CD14-positive monocyte (primary cell): ENCODE measurements at regions of chr1 and their contacts with region 1.

Region 1: GRCh38 chr1:29202584-29203340 is 21.1 kb upstream of the SRSF4 start:
- DNase-seq: peak; percentile 87 to 92 (median 92)
- H3K4me3 ChIP-seq: peak overlapping the region in 1 of 3 experiments; percentile 34
- H3K4me3 Mint-ChIP-seq: peak overlapping the region in 1 of 2 donors; percentile 51
- H3K27ac ChIP-seq: peak overlapping the region; percentile 57 to 76
- H3K27ac Mint-ChIP-seq: peak overlapping the region; percentile 78 to 95 (median 85)
- H3K4me1 ChIP-seq: peaks cover 19 to 22% of the 10 kb centered on the region in 2 donors
- H3K4me1 Mint-ChIP-seq: peaks cover 20% of the 10 kb centered on the region
- H3K27me3 ChIP-seq: no peaks in the 10 kb centered on the region
- H3K27me3 Mint-ChIP-seq: no peaks in the 10 kb centered on the region
- CTCF ChIP-seq: peak; percentile 88

Region 2: DNA sequence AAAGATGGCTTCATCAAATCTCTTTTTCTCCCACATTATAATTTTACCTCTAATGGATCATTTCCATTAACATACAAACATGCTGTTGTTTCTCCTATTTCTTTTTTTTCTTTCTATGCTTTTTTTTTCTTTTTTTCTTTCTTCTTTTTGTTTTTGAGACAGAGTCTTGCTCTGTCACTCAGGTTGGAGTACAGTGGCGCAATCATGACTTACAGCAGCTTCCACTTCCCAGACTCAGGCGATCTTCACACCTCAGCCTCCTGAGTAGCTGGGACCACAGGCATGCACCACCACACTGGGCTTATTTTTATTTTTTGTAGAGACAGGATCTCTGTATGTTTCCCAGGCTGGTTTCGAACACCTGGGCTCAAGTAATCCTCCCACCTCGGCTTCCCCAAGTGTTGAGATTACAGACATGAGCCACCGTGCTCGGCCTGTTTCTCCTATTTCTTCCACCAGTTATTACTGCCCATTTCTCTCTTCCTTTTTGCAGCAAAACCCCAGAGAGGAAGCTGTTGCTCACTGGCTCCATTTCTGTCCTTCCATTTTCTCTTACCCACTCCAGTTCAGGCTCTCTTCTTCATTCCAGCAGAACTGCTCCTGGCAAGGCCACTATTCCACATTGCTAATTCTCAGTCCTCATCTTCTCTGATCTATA is 422.9 kb before region 1 on chr1:
- intact Hi-C with region 1: loop called in 1 of 2 experiments (anchors 10 kb)
- DNase-seq: peak; percentile 20 to 37 (median 35)
- H3K4me3 ChIP-seq: peak overlapping the region in 1 of 3 experiments; percentile 40
- H3K4me3 Mint-ChIP-seq: peak overlapping the region; percentile 7 to 67
- H3K27ac ChIP-seq: peak overlapping the region; percentile 56 to 80
- H3K27ac Mint-ChIP-seq: peak overlapping the region; percentile 54 to 91 (median 78)
- H3K4me1 ChIP-seq: peaks cover 25 to 29% of the 10 kb centered on the region in 2 donors
- H3K4me1 Mint-ChIP-seq: peaks cover 39% of the 10 kb centered on the region
- H3K27me3 ChIP-seq: no peaks in the 10 kb centered on the region
- H3K27me3 Mint-ChIP-seq: peaks cover 0 to 2% (median 0%) of the 10 kb centered on the region in 3 donors
- CTCF ChIP-seq: no peak

Region 3: GRCh38 chr1:29181413-29182225 is 21.1 kb before region 1 on chr1 and contains the start of gene SRSF4:
- intact Hi-C with region 1: loop called in 1 of 2 experiments (anchors 2 kb)
- DNase-seq: peak; percentile 98 to 99 (median 98)
- H3K4me3 ChIP-seq: peak within 1 kb of the TSS; percentile 80 to 91 (median 87)
- H3K4me3 Mint-ChIP-seq: peak within 1 kb of the TSS; percentile 93 to 95
- H3K27ac ChIP-seq: peak within 1 kb of the TSS; percentile 91 to 96
- H3K27ac Mint-ChIP-seq: peak within 1 kb of the TSS; percentile 91 to 97 (median 95)
- H3K4me1 ChIP-seq: peaks cover 35 to 52% of the 10 kb centered on the region in 2 donors
- H3K4me1 Mint-ChIP-seq: peaks cover 51% of the 10 kb centered on the region
- H3K27me3 ChIP-seq: no peaks in the 10 kb centered on the region
- H3K27me3 Mint-ChIP-seq: peaks cover 0 to 2% (median 0%) of the 10 kb centered on the region in 3 donors
- CTCF ChIP-seq: peak; percentile 76
- polyA plus RNA-seq, gene SRSF4: 38.4 to 66.8 (median 55.5) TPM

Region 4: DNA sequence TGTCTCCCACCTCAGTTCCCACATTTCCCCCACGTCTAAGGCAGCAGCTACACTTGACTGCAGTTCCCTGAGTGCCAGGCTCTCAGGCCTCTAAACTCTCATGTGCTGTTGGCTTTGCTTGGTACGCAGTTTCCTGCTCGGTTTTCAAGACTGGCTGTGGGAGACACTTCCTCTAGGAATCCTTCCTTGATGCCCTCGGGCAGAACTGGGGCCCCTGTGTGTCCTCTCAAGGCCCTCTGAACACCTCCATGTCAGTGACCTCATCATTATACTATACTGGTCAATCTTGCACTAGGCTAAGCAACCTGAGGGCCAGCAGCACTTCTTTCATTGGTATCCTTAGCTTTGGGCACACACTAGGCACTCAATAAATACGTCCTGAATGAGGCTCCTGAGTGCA is 10.5 kb before region 1 on chr1:
- intact Hi-C with region 1: no loop called
- DNase-seq: no peak
- H3K4me3 ChIP-seq: no peak overlapping the region
- H3K4me3 Mint-ChIP-seq: no peak overlapping the region
- H3K27ac ChIP-seq: no peak overlapping the region
- H3K27ac Mint-ChIP-seq: no peak overlapping the region
- H3K4me1 ChIP-seq: no peaks in the 10 kb centered on the region
- H3K4me1 Mint-ChIP-seq: no peaks in the 10 kb centered on the region
- H3K27me3 ChIP-seq: no peaks in the 10 kb centered on the region
- H3K27me3 Mint-ChIP-seq: peaks cover 0 to 4% (median 0%) of the 10 kb centered on the region in 3 donors
- CTCF ChIP-seq: no peak

Region 5: GRCh38 chr1:29356663-29357062 is 153.9 kb after region 1 on chr1:
- intact Hi-C with region 1: no loop called
- DNase-seq: no peak
- H3K4me3 ChIP-seq: no peak overlapping the region
- H3K4me3 Mint-ChIP-seq: no peak overlapping the region
- H3K27ac ChIP-seq: no peak overlapping the region
- H3K27ac Mint-ChIP-seq: no peak overlapping the region
- H3K4me1 ChIP-seq: no peaks in the 10 kb centered on the region
- H3K4me1 Mint-ChIP-seq: no peaks in the 10 kb centered on the region
- H3K27me3 ChIP-seq: peaks cover 0 to 2% of the 10 kb centered on the region in 2 donors
- H3K27me3 Mint-ChIP-seq: peaks cover 11 to 14% (median 13%) of the 10 kb centered on the region in 3 donors
- CTCF ChIP-seq: no peak

Region 6: DNA sequence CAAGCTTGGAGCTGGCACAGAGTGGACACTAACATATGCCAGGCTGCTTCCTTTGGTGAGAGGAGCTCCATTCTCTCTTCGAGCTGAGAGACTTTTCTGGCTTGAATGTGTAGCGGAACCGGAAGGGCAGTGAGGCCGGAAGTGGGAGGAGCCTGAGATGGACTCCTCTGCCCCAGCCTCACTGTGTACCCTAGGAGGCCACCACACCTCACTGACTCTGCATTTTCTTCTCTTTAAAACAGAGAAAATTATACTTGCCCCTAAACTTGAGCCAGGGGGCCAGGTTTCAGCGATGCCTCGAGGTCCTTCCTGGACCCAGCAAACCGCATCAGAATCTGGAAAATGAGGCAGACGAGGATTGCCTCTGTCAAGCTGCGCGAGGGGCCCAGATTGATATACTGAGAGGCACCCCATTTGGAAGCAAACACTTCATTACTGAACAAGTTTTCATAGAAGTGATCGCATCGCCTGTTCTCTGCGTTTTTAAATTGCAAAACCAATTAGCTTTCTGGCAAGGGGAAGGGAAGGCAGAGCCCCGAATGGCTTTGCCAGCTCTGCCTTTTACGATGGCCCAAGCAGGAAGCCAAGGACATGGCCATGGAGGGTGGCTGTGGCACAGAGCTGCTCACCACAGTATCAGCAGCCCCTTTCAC is 741.6 kb after region 1 on chr1:
- intact Hi-C with region 1: no loop called
- DNase-seq: no peak
- H3K4me3 ChIP-seq: no peak overlapping the region
- H3K4me3 Mint-ChIP-seq: no peak overlapping the region
- H3K27ac ChIP-seq: no peak overlapping the region
- H3K27ac Mint-ChIP-seq: no peak overlapping the region
- H3K4me1 ChIP-seq: no peaks in the 10 kb centered on the region
- H3K4me1 Mint-ChIP-seq: peaks cover 4% of the 10 kb centered on the region
- H3K27me3 ChIP-seq: no peaks in the 10 kb centered on the region
- H3K27me3 Mint-ChIP-seq: peaks cover 3 to 8% (median 5%) of the 10 kb centered on the region in 3 donors
- CTCF ChIP-seq: no peak